Activated naive CD4-positive, alpha-beta T cell treated with anti-CD3 and anti-CD28 coated beads for 36 hours (primary cell): ENCODE measurements at regions of chr5 and their contacts with region 1.

Region 1: GRCh38 chr5:173144200-173145176 is at the start of gene BNIP1:
- DNase-seq: peak; percentile 99
- H3K4me3 Mint-ChIP-seq: peak within 1 kb of the TSS; percentile 97
- H3K27ac Mint-ChIP-seq: peak within 1 kb of the TSS; percentile 92
- H3K4me1 Mint-ChIP-seq: peaks cover 14% of the 10 kb centered on the region
- H3K27me3 Mint-ChIP-seq: no peaks in the 10 kb centered on the region
- total RNA-seq, gene BNIP1: 29.4 to 30.4 TPM

Region 2: GRCh38 chr5:172764849-172765765 is 379.4 kb before region 1 on chr5:
- CTCF ChIA-PET with region 1: no interaction called
- intact Hi-C with region 1: loop called (anchors 2 kb)
- DNase-seq: peak; percentile 99
- H3K4me3 Mint-ChIP-seq: peak overlapping the region; percentile 77
- H3K27ac Mint-ChIP-seq: peak overlapping the region; percentile 87
- H3K4me1 Mint-ChIP-seq: peaks cover 43% of the 10 kb centered on the region
- H3K27me3 Mint-ChIP-seq: no peaks in the 10 kb centered on the region

Region 3: DNA sequence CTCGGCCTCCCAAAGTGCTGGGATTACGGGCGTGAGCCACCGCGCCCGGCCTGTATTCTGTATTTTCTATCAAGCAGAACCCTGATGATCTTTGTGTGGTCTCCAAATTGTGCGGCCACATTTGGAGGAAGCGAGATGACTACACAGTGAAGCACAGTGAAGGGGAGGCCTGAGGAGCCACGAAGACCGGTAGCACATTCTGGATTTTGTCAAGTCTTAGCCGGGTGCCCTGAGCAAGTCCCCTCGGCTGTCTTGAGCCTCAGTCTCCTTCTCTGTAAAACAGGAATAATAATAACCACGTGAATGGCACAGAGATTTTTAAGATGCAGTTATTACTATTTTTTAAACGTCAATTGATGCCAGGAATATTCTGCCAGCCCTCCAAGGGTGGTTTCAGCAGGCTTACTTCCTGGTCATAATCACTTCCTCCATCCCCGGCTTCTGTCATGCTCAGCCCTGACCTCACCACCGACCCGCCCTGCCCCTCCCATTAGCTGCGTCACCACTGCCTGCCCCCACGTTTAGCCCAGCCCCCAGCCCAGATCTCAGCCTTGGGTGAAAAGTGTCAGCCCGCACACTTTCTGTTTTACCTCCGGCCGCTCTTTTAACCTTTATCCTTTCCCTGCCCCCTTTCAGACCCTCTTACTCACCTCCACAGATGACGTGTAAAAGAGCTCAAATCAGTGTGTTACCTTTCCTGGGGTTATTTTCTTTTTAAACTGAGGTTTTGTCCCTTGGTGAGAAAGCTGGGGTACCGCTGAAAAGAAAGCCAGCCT is 337.4 kb before region 1 on chr5:
- CTCF ChIA-PET with region 1: interaction called, 3 read pairs
- intact Hi-C with region 1: loop called (anchors 1 kb)
- DNase-seq: peak; percentile 98
- H3K4me3 Mint-ChIP-seq: peak overlapping the region; percentile 43
- H3K27ac Mint-ChIP-seq: peak overlapping the region; percentile 86
- H3K4me1 Mint-ChIP-seq: peaks cover 14% of the 10 kb centered on the region
- H3K27me3 Mint-ChIP-seq: no peaks in the 10 kb centered on the region

Region 4: GRCh38 chr5:172984243-172984953 is 160.1 kb before region 1 on chr5:
- CTCF ChIA-PET with region 1: interaction called, 17 read pairs
- intact Hi-C with region 1: loop called (anchors 1 kb)
- DNase-seq: peak; percentile 91
- H3K4me3 Mint-ChIP-seq: peak overlapping the region; percentile 97
- H3K27ac Mint-ChIP-seq: peak overlapping the region; percentile 97
- H3K4me1 Mint-ChIP-seq: peaks cover 38% of the 10 kb centered on the region
- H3K27me3 Mint-ChIP-seq: no peaks in the 10 kb centered on the region

Region 5: GRCh38 chr5:173057062-173057924 is 87.2 kb before region 1 on chr5:
- CTCF ChIA-PET with region 1: interaction called, 4 read pairs
- intact Hi-C with region 1: loop called (anchors 1 kb)
- DNase-seq: peak; percentile 100
- H3K4me3 Mint-ChIP-seq: peak overlapping the region; percentile 91
- H3K27ac Mint-ChIP-seq: peak overlapping the region; percentile 97
- H3K4me1 Mint-ChIP-seq: peaks cover 51% of the 10 kb centered on the region
- H3K27me3 Mint-ChIP-seq: no peaks in the 10 kb centered on the region

Region 6: GRCh38 chr5:173283318-173284288 is 139.1 kb after region 1 on chr5:
- CTCF ChIA-PET with region 1: no interaction called
- intact Hi-C with region 1: loop called (anchors 10 kb)
- DNase-seq: peak; percentile 83
- H3K4me3 Mint-ChIP-seq: peak overlapping the region; percentile 35
- H3K27ac Mint-ChIP-seq: no peak overlapping the region
- H3K4me1 Mint-ChIP-seq: peaks cover 6% of the 10 kb centered on the region
- H3K27me3 Mint-ChIP-seq: peaks cover 57% of the 10 kb centered on the region